ENCODE measurements at regions of chr18 and their contacts with region 1.

Region 1: DNA sequence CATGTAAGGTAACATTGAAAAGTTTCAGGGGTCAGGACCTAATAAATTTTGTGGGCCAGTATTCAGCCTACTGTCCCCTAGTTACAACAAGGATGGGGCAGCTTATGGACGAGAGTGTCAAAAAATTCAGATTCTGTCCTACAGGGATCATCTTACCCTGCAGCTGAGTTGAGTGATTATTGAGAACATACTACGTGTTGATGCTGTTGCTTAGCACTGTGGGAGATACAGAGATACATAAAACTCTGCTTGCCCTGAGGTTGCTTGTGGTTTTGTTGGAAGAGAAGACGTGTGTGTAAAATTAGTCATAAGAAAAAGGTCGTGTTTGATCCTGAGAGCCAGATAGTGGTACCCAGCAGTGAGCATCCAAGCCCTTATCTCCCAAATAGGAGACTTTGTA is 253.2 kb downstream of the NEDD4L start:
- DNase-seq: no peak

Region 2: DNA sequence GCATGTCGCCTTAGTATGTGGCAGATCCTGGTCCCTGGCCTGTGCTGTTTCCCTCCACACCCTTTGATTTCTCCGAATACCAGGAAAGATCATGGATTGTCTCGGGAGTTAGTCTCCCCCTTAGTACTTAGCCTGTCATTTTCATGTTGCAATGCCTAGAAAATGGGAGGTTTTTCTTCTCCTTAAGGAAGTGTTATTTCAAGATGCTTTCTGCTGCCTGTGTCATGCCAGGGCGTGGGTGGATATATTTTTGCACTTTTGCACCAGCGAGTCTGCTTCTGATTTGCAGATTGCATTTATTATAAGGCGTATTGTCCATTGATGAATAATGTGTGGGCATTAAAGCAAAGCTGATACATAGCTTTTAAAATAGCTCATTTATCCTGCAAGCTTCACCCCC is 29.7 kb before region 1 on chr18:
- intact Hi-C with region 1: loop called in 1 of 2 experiments (anchors 1 kb)
- DNase-seq: no peak

Measured in posterior vena cava (tissue), 2 donors.